PC-9 (cell line): ENCODE measurements at regions of chr19 and their contacts with region 1.

Region 1: DNA sequence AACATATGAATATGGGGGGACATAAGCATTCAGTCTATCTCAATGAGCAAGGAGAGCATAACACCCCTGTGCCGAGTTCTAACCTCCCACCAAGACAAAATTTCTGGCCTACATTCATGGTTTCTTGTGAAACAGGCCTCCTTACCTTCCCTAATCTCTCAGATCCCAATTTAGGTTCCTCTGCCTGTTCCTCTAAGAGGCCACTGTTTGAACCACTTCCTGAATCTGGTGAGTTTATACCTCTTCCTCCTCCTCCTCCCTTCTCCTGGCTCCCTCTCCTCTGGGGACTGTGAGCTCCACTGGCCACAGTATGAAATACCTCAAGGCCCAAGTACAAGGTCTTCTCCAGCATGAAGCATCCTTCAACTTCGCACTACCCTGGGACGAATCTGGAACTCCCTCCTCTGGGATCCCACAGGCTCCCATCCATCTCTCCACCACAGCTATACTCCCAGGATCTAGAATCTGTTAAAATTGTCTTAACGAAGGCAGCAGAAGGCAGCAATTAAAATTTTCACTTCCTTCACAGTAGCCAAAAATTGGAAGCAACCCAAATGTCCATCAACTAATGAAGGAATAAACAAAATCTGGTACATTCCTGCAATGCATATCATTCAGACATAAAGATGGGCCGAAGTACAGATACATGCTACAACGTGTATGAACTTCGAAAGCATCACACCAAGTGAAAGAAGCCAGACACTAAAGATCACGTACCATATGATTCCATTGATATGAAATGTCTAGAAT is 7.8 kb upstream of the SIGLECL1 start:
- DNase-seq: no peak
- H3K4me3 ChIP-seq: no peak overlapping the region
- H3K27ac ChIP-seq: no peak overlapping the region
- H3K4me1 ChIP-seq: no peaks in the 10 kb centered on the region
- H3K27me3 ChIP-seq: peaks cover 99% of the 10 kb centered on the region
- CTCF ChIP-seq: no peak

Region 2: DNA sequence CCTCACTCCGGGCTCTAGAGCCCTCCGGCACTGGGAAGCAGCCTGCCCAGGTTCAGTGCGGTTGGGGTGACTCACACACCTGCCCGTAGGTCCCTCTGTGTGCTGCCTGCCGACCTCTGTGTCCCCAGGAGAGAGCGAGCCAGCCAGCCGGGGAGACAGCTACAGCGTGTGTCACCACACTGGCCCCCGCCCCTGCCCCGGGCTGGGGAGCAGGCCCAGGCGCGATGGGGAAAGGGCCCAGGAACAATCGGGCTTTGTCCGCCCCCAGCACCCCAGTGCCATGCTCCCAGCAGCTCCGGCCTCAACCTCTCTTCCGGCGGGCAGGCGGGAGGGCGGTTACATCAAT is 273.7 kb before region 1 on chr19 and contains the start of gene KLK6:
- CTCF ChIA-PET with region 1: no interaction called
- POLR2A ChIA-PET with region 1: no interaction called
- intact Hi-C with region 1: no loop called
- DNase-seq: peak; percentile 97 to 99
- H3K4me3 ChIP-seq: peak within 1 kb of the TSS; percentile 76
- H3K27ac ChIP-seq: peak within 1 kb of the TSS; percentile 92
- H3K4me1 ChIP-seq: peaks cover 79% of the 10 kb centered on the region
- H3K27me3 ChIP-seq: no peaks in the 10 kb centered on the region
- CTCF ChIP-seq: no peak
- total RNA-seq, gene KLK6: 490 and 581 TPM in 2 replicates

Region 3: GRCh38 chr19:51157265-51157664 is 85.8 kb before region 1 on chr19:
- CTCF ChIA-PET with region 1: no interaction called
- POLR2A ChIA-PET with region 1: interaction called, 14 read pairs
- intact Hi-C with region 1: no loop called
- DNase-seq: no peak
- H3K4me3 ChIP-seq: no peak overlapping the region
- H3K27ac ChIP-seq: no peak overlapping the region
- H3K4me1 ChIP-seq: no peaks in the 10 kb centered on the region
- H3K27me3 ChIP-seq: peaks cover 82% of the 10 kb centered on the region
- CTCF ChIP-seq: no peak

Region 4: DNA sequence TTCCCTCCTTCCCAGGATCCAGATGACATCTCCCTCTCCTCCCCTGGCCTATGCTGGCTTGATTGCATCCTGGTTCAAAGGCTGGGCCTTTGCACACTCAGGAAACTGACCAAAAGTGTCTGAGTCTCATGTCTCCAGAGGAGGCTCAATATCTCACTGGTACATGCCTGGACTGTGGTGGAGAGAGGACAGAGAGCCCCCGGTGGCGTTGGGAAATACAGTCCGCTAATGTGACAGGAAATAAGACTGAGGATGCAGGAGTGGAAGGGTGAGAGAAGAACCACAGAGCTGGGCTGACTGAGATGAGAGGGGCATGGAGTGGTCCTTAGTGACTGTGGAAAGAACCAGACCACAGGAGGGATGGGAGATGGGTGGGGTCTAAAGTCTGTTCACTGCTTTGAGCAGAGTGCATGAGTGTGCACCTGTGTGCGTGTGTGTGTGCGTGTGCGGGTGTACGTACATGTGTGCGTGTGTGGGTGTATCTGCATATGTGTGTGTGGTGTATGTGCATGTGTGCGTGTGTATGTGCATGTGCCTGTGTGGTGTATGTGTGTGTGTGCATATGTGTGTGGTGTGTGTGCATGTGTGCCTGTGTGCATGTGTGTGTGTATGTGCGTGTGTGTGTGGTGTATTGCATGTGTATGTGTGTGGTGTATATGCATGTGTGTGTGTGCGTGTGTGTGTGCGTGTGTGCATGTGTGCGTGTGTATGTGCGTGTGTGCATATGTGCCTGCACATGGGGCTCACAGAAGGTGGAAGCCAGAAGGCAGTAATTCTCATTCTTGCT is 385.3 kb after region 1 on chr19:
- CTCF ChIA-PET with region 1: no interaction called
- POLR2A ChIA-PET with region 1: no interaction called
- intact Hi-C with region 1: no loop called
- DNase-seq: no peak
- H3K4me3 ChIP-seq: no peak overlapping the region
- H3K27ac ChIP-seq: no peak overlapping the region
- H3K4me1 ChIP-seq: no peaks in the 10 kb centered on the region
- H3K27me3 ChIP-seq: peaks cover 59% of the 10 kb centered on the region
- CTCF ChIP-seq: no peak